ENCODE measurements at regions of chr17 and their contacts with region 1.

Region 1: DNA sequence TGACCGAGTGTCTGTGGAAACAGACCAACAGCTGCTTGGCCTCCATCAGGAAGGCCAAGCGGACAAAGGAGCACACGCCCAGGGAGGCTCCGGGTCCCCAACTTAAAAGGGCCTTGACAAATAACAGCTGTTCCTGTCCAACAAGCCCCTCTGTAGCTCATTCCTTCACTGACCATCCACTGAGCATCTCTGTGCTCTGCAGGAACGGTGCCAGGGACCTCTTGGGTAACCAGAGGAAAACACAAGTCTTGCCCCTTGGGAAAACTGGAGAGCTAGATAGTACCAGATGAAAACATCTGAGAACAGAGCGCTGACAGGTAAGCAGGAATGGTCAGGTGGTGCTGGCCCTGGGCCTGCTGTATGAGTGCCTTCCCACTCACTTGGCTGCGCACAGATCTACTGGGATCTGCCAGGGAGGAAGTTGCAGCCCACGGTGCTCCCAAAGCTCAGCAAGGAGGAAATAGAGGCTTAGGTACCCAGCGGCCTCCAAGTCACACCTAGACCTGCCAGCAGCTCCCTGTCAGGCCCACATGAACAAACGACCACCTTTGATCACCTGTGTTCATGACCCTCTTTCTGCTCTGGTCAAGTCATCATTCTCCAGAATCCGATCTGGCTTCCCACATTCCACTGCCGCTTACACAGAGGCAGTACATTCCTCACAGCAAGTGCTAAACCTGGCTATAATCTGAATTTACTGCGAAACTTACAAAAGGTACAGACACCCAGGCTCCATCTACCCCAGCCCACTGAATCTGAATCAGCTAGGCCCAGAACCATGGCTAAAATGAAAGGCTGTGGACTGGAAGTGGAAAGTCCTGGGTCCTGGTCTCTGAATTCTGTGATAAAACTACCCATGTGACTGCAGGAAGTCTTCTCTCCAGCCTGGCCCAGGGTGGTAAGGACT is 12.5 kb downstream of the DCAKD start:
- H3K4me3 ChIP-seq: no peak overlapping the region
- H3K27ac ChIP-seq: peak overlapping the region; percentile 34; the same call in 1 of the 2 replicates
- H3K4me1 ChIP-seq: peaks cover 8% of the 10 kb centered on the region; the same call in 1 of the 2 replicates
- CTCF ChIP-seq: no peak

Region 2: DNA sequence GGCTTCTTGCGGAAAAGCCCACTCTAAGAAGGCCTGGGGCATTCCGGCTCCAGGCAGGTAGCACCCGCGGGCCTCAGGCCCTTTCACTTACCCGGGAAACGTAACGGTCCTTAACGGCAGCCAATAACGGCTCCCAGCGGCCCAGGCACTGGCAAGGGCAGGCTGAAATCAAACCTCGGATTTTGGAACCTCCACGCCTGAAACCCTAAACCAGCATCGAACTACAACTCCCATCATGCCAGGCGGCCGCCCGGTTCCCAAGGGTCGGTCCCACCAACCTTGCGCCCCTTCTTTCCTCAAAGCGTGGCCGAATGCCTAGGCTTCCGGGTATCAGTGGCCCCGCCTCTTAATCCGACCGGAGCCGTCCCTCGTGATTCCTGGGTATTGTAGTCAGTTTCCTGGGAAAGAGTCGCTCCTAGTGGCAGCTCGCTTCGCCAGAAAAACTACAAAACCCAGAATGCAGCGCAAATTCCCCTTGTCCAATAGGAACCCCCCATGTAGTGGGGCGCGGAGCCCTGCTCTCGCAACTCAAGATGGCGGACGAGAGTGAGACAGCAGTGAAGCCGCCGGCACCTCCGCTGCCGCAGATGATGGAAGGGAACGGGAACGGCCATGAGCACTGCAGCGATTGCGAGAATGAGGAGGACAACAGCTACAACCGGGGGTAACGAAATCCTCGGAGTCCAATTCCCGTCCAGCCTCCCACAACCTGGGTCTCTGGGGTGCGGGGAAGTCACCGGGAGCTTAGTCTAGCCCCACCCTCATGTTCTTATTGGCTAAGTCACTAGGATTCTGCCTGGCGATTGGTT is 22.0 kb after region 1 on chr17 and contains the start of gene NMT1:
- CTCF ChIA-PET with region 1: interaction called, 4 read pairs
- POLR2A ChIA-PET with region 1: interaction called, 11 read pairs
- H3K4me3 ChIP-seq: peak within 1 kb of the TSS; percentile 93
- H3K27ac ChIP-seq: peak within 1 kb of the TSS; percentile 82
- H3K4me1 ChIP-seq: peaks cover 13% of the 10 kb centered on the region
- CTCF ChIP-seq: no peak

Region 3: GRCh38 chr17:45161019-45161825 is 122.2 kb after region 1 on chr17:
- CTCF ChIA-PET with region 1: no interaction called
- POLR2A ChIA-PET with region 1: no interaction called
- H3K4me3 ChIP-seq: peak overlapping the region; percentile 97
- H3K27ac ChIP-seq: peak overlapping the region; percentile 92
- H3K4me1 ChIP-seq: peaks cover 15% of the 10 kb centered on the region
- CTCF ChIP-seq: no peak